Activated naive CD4-positive, alpha-beta T cell treated with anti-CD3 and anti-CD28 coated beads for 36 hours (primary cell): ENCODE measurements at regions of chrX and their contacts with region 1.

Region 1: GRCh38 chrX:79412972-79413371 is 45.8 kb upstream of the ITM2A start:
- DNase-seq: no peak
- H3K4me3 Mint-ChIP-seq: peak overlapping the region; percentile 66
- H3K27ac Mint-ChIP-seq: peak overlapping the region; percentile 69
- H3K4me1 Mint-ChIP-seq: peaks cover 21% of the 10 kb centered on the region
- H3K27me3 Mint-ChIP-seq: no peaks in the 10 kb centered on the region

Region 2: DNA sequence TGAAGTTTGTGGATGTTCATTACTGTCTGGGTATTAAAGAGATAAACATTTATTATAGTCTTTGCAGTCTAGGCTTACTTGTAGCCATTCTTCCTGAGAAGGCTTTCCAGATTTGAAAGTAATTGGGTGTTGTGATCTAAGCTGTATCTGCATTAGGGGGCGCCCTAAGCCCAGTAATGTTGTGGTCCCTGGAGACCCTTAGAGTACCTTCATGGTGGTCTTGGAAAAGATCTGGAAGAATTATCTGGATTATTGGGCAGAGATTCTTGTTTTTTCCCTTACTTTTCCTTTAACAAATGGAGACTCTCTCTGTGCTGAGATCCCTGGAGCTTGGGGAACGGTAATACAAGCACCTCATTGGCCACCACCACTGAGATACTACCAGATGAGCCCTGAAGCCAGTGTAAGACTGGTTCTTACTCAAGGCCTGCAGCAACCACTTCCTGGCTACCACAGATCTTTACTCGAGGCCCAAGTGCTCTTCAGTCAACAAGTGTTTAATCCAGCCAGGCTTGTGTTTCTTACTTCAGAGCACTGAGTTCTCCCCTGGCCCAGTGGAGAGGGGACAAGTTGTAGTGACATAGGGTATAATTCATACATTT is 817.0 kb before region 1 on chrX:
- CTCF ChIA-PET with region 1: no interaction called
- intact Hi-C with region 1: loop called (anchors 5 kb)
- DNase-seq: peak; percentile 20
- H3K4me3 Mint-ChIP-seq: no peak overlapping the region
- H3K27ac Mint-ChIP-seq: no peak overlapping the region
- H3K4me1 Mint-ChIP-seq: no peaks in the 10 kb centered on the region
- H3K27me3 Mint-ChIP-seq: no peaks in the 10 kb centered on the region

Region 3: GRCh38 chrX:79036157-79036880 is 376.7 kb before region 1 on chrX:
- CTCF ChIA-PET with region 1: no interaction called
- intact Hi-C with region 1: loop called (anchors 1 kb)
- DNase-seq: no peak
- H3K4me3 Mint-ChIP-seq: peak overlapping the region; percentile 36
- H3K27ac Mint-ChIP-seq: no peak overlapping the region
- H3K4me1 Mint-ChIP-seq: peaks cover 42% of the 10 kb centered on the region
- H3K27me3 Mint-ChIP-seq: no peaks in the 10 kb centered on the region

Region 4: DNA sequence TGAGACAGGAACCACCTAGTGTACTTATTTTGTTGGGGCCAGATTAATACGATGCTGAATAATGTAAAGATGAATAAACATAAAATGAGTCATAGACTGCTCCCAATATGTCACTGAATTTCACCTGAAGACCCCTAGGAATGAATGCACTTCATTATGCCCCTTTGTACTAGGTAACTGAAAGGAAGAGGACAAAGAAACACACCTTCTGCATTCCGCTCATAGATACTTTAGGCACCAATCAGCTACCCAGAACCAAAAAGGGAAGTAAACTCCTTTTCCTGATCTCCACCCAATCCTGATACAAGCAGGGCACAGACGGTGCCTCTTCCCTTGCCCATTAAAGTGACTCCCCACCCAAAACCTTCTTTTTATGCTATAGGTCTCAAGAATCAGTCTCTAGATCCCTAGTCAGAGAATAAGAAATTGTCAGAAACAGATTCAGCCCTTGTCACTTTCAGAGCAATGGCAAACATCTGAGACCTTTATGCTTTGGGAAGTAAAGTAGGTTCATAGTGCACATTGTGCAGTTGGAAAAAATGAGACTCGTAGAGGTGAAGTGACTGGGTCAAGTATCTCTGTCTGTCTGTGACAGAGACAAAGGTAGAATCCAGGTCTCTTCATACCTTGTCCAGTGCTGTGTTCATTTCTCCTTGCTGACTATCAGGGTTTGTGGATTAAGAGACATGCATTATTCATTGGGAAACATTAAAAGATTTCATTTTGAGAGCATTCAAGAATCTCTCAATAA is 266.2 kb before region 1 on chrX:
- CTCF ChIA-PET with region 1: no interaction called
- intact Hi-C with region 1: no loop called
- DNase-seq: no peak
- H3K4me3 Mint-ChIP-seq: peak overlapping the region; percentile 93
- H3K27ac Mint-ChIP-seq: peak overlapping the region; percentile 96
- H3K4me1 Mint-ChIP-seq: peaks cover 31% of the 10 kb centered on the region
- H3K27me3 Mint-ChIP-seq: no peaks in the 10 kb centered on the region

Region 5: DNA sequence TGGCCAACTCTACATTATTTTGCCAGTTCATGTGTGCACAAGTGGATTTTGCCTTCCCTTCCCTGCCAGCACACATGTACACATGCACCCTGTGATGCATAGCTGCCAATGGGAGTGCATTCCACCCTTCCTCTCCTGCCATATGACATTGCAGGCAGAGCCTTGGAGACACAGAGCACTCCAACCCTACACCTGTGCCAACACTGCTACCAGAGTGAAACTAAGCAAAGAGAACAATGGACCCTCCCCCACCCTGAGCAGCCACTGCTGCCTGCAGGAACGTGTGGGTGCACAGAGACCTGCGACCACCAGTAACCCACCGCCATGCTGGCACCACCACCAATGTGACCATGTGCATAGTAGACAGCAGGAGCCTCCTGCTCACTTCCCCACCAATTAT is 124.2 kb before region 1 on chrX:
- CTCF ChIA-PET with region 1: interaction called, 3 read pairs
- intact Hi-C with region 1: loop called (anchors 2 kb)
- DNase-seq: no peak
- H3K4me3 Mint-ChIP-seq: no peak overlapping the region
- H3K27ac Mint-ChIP-seq: no peak overlapping the region
- H3K4me1 Mint-ChIP-seq: peaks cover 49% of the 10 kb centered on the region
- H3K27me3 Mint-ChIP-seq: no peaks in the 10 kb centered on the region

Region 6: DNA sequence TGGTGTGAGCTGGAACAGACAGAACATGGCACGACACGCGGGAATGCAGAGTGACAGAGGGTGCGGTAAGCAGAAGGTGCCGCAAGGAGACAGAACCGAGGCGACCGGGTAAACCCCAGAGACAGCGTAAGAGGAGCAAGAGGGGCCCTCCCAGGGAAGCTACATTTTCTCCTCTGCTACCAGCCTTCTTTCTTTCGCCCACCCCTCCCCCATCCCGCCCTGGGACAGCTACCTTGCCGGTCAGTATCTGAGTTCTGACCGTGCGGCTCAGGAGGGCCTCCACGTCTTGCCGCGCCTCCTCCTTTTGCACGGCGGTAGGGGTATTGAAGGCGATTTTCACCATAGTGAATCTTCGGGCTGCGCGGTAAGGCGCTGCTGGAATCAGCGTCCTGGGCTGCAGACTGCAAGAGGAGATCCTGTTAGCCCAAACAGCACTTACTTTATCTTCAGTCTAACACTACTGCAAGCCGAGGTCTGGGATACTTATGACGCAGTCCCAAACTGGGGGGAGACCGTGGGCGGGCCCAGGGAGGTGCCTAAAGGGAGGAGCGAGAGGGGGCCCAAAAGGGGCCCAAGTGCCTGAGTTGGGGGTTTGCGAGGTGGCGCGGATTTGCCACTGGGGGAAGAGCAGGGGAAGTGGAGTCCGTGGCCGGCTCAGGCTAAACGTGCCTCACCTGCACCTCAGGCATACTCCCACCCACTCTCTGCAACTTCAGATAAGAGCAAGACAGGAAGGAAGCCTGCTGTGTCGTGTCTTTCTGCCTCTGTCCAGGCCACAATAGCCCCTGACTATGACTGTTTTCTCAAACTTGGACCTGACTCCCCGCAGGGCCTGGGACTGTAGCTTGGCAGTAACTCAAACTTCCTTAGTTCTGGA is 45.9 kb before region 1 on chrX and contains the start of gene ITM2A:
- CTCF ChIA-PET with region 1: interaction called, 9 read pairs
- intact Hi-C with region 1: loop called (anchors 2 kb)
- DNase-seq: peak; percentile 76
- H3K4me3 Mint-ChIP-seq: peak within 1 kb of the TSS; percentile 86
- H3K27ac Mint-ChIP-seq: peak within 1 kb of the TSS; percentile 93
- H3K4me1 Mint-ChIP-seq: peaks cover 39% of the 10 kb centered on the region
- H3K27me3 Mint-ChIP-seq: no peaks in the 10 kb centered on the region
- total RNA-seq, gene ITM2A: 99.5 to 116 TPM

Region 7: GRCh38 chrX:79440336-79440735 is 27.4 kb after region 1 on chrX:
- CTCF ChIA-PET with region 1: no interaction called
- intact Hi-C with region 1: no loop called
- DNase-seq: no peak
- H3K4me3 Mint-ChIP-seq: no peak overlapping the region
- H3K27ac Mint-ChIP-seq: no peak overlapping the region
- H3K4me1 Mint-ChIP-seq: no peaks in the 10 kb centered on the region
- H3K27me3 Mint-ChIP-seq: no peaks in the 10 kb centered on the region

Region 8: GRCh38 chrX:79623098-79623762 is 210.3 kb after region 1 on chrX:
- CTCF ChIA-PET with region 1: no interaction called
- intact Hi-C with region 1: no loop called
- DNase-seq: no peak
- H3K4me3 Mint-ChIP-seq: no peak overlapping the region
- H3K27ac Mint-ChIP-seq: no peak overlapping the region
- H3K4me1 Mint-ChIP-seq: no peaks in the 10 kb centered on the region
- H3K27me3 Mint-ChIP-seq: peaks cover 4% of the 10 kb centered on the region